ENCODE measurements at regions of chr1 and their contacts with region 1.

Region 1: GRCh38 chr1:84907095-84907827 is 14.3 kb upstream of the LPAR3 start:
- DNase-seq: no peak
- H3K4me3 ChIP-seq: no peak overlapping the region
- H3K27ac ChIP-seq: no peak overlapping the region
- H3K4me1 ChIP-seq: no peaks in the 10 kb centered on the region
- H3K27me3 ChIP-seq: no peaks in the 10 kb centered on the region
- CTCF ChIP-seq: no peak

Region 2: GRCh38 chr1:84753516-84754385 is 153.5 kb before region 1 on chr1:
- intact Hi-C with region 1: no loop called
- DNase-seq: peak in 1 of 2 donors; percentile 70
- H3K4me3 ChIP-seq: no peak overlapping the region
- H3K27ac ChIP-seq: no peak overlapping the region
- H3K4me1 ChIP-seq: peaks cover 0 to 3% of the 10 kb centered on the region in 2 donors
- H3K27me3 ChIP-seq: no peaks in the 10 kb centered on the region
- CTCF ChIP-seq: peak; percentile 85 to 97 (median 89)

Region 3: DNA sequence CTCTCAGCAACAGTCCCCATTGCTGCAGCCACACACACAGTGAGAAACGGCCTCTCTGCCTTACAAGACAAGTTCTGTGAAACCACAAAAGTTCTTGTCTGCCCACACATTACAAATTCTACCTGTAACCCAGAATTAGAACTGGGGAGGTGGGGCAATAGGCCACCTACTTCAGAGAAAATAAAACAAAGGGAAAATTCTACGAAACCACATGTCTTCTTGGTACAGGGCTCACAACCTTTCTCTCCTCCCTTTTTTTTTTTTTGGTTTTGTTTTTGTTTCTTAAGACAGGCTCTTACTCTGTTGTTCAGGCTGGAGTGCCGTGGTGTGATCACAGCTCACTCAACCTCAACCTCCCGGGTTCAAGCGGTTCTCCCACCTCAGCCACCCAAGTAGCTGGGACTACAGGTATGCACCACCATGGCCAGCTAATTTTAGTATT is 44.4 kb before region 1 on chr1:
- intact Hi-C with region 1: loop called (anchors 2 kb)
- DNase-seq: no peak
- H3K4me3 ChIP-seq: no peak overlapping the region
- H3K27ac ChIP-seq: no peak overlapping the region
- H3K4me1 ChIP-seq: no peaks in the 10 kb centered on the region
- H3K27me3 ChIP-seq: no peaks in the 10 kb centered on the region
- CTCF ChIP-seq: no peak

Region 4: GRCh38 chr1:84973498-84974334 is 66.5 kb after region 1 on chr1:
- intact Hi-C with region 1: no loop called
- DNase-seq: no peak
- H3K4me3 ChIP-seq: no peak overlapping the region
- H3K27ac ChIP-seq: no peak overlapping the region
- H3K4me1 ChIP-seq: no peaks in the 10 kb centered on the region
- H3K27me3 ChIP-seq: no peaks in the 10 kb centered on the region
- CTCF ChIP-seq: no peak

Region 5: GRCh38 chr1:85102474-85102873 is 195.2 kb after region 1 on chr1:
- intact Hi-C with region 1: no loop called
- DNase-seq: no peak
- H3K4me3 ChIP-seq: no peak overlapping the region
- H3K27ac ChIP-seq: no peak overlapping the region
- H3K4me1 ChIP-seq: no peaks in the 10 kb centered on the region
- H3K27me3 ChIP-seq: no peaks in the 10 kb centered on the region
- CTCF ChIP-seq: no peak

Measured in ascending aorta (tissue), 2 donors.